Activated naive CD8-positive, alpha-beta T cell treated with anti-CD3 and anti-CD28 coated beads, Interleukin-2, amount 10 ng/mL, durations not matched to agents 7 days and 5 days (primary cell): ENCODE measurements at regions of chr9 and their contacts with region 1.

Region 1: GRCh38 chr9:137240861-137241489 is at the start of gene TUBB4B:
- DNase-seq: peak; percentile 99
- ATAC-seq: peak; percentile 83
- H3K4me3 Mint-ChIP-seq: peak within 1 kb of the TSS; percentile 90
- H3K27ac Mint-ChIP-seq: peak within 1 kb of the TSS; percentile 93
- H3K4me1 Mint-ChIP-seq: peaks cover 24% of the 10 kb centered on the region
- H3K27me3 Mint-ChIP-seq: no peaks in the 10 kb centered on the region
- total RNA-seq, gene TUBB4B: 241 to 249 TPM

Region 2: GRCh38 chr9:136910901-136911245 is 330.1 kb before region 1 on chr9:
- POLR2A ChIA-PET with region 1: no interaction called
- DNase-seq: no peak
- ATAC-seq: no peak
- H3K4me3 Mint-ChIP-seq: no peak overlapping the region
- H3K27ac Mint-ChIP-seq: peak overlapping the region; percentile 67
- H3K4me1 Mint-ChIP-seq: peaks cover 2% of the 10 kb centered on the region
- H3K27me3 Mint-ChIP-seq: no peaks in the 10 kb centered on the region

Region 3: GRCh38 chr9:137070201-137070905 is 170.6 kb before region 1 on chr9 and contains the start of gene SAPCD2:
- POLR2A ChIA-PET with region 1: interaction called, 12 read pairs
- DNase-seq: peak; percentile 90
- ATAC-seq: peak; percentile 90
- H3K4me3 Mint-ChIP-seq: peak within 1 kb of the TSS; percentile 82
- H3K27ac Mint-ChIP-seq: peak within 1 kb of the TSS; percentile 91
- H3K4me1 Mint-ChIP-seq: peaks cover 22% of the 10 kb centered on the region
- H3K27me3 Mint-ChIP-seq: no peaks in the 10 kb centered on the region
- total RNA-seq, gene SAPCD2: 26.4 to 30.0 TPM

Region 4: DNA sequence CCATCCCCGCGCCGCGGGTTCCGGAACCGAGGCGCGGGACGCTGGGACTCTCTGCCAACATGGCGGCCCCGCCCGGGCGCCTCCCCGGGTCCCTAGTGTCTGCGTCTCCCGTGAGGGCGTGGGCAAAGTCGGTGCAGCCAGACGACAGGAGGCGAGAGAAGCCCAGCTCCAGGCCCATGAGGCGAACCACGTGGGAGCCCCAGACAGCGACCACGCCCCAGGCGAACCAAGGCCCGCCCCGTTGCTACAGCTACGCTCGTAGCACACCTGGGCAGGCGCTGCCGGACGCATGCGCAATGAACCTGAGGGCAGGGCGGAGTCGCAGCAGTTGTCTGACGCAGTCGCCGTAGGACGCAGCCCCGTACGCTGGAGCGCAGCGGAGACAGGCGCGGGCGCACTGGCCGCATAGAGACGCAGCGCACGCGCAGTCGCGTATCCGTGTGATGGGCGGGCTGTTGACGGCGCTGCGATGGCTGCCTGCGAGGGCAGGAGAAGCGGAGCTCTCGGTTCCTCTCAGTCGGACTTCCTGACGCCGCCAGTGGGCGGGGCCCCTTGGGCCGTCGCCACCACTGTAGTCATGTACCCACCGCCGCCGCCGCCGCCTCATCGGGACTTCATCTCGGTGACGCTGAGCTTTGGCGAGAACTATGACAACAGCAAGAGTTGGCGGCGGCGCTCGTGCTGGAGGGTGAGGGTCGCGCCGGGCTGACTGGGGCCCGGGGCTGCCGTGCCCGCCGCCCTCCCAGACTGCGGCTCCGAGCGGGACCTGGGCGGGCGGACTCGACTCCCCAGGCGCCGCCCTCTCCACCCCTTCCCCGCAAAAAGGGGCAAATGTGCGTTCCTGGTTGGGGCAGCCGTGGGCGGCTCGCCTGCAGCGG is 154.2 kb before region 1 on chr9 and contains the start of gene MAN1B1:
- POLR2A ChIA-PET with region 1: interaction called, 32 read pairs
- DNase-seq: peak; percentile 99
- ATAC-seq: peak; percentile 89
- H3K4me3 Mint-ChIP-seq: peak within 1 kb of the TSS; percentile 92
- H3K27ac Mint-ChIP-seq: peak within 1 kb of the TSS; percentile 93
- H3K4me1 Mint-ChIP-seq: peaks cover 23% of the 10 kb centered on the region
- H3K27me3 Mint-ChIP-seq: no peaks in the 10 kb centered on the region
- total RNA-seq, gene MAN1B1: 63.2 to 63.9 TPM

Region 5: DNA sequence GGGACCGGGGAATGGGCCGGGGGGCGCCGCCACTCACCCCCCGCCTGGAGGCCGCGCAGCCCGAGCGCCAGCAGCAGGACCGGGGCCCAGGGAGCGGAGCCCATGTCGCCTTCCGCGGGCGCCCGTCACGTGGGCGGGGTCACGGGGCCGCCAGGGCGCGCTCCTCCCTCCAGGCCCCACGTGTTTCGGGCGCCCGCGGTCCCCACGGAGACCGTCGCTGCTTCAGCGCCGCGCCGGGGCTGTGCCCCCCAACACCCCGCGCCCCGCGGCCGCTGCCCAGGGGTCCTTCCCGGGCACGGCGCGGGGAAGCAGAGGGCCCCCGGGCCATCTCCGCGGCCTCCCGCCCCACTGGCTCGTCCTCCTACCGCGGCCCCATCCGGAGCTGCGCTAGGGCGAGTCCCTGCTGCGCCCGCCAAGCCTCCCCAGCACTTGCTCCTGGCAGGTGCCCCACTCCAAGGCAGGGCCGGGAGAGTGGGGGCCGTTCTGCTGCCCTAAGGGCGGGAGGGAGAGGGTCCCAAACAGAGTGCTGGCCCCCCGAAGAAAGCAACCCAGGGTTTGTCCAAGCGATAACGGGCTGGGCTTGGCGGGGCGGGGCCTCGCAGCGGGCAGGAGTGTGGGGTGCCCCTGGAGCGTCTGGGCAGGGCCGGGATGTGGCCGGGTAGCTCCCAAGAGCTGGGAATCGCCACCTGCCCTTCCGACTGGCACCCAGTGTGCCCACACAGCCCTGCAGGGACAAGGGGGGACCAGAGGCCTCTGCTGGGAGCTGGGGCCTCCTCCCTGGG is 126.2 kb before region 1 on chr9 and contains the start of gene DPP7:
- POLR2A ChIA-PET with region 1: interaction called, 14 read pairs
- DNase-seq: peak; percentile 91
- ATAC-seq: peak; percentile 89
- H3K4me3 Mint-ChIP-seq: peak within 1 kb of the TSS; percentile 74
- H3K27ac Mint-ChIP-seq: peak within 1 kb of the TSS; percentile 52
- H3K4me1 Mint-ChIP-seq: peaks cover 3% of the 10 kb centered on the region
- H3K27me3 Mint-ChIP-seq: no peaks in the 10 kb centered on the region
- total RNA-seq, gene DPP7: 314 to 322 TPM

Region 6: DNA sequence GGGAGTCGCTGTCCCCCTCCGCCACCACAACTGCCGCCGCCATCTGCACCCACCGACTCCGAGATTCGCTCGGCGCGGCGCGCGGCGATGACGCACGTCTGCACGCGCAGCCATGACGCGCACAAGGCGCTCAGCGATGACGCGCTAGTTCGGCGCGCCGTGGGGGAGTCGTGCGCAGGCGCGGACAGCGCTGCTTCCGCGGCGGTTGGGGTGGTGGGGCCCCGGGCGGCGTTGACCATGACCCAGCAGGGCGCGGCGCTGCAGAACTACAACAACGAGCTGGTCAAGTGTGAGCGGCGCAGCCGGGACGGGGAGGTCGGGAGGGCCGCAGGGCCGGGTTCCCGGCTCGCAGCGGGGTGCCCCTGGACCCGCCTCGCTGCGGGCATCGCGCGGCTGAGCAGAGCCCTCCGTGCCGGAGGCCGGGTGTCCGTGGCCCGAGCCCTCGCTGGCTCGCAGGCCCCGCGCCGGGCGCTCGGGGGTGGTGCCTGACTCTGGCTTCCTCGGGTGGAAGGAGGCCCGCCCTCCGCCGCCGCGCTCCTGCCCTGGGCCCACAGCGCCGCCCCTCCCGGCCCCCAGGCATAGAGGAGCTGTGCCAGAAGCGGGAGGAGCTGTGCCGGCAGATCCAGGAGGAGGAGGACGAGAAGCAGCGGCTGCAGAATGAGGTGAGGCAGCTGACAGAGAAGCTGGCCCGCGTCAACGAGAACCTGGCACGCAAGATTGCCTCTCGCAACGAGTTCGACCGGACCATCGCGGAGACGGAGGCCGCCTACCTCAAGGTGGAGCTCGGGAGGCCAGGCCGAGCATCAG is 52.3 kb before region 1 on chr9 and contains the starts of genes ANAPC2 and SSNA1:
- POLR2A ChIA-PET with region 1: interaction called, 19 read pairs
- DNase-seq: peak; percentile 99
- ATAC-seq: peak; percentile 83
- H3K4me3 Mint-ChIP-seq: peak within 1 kb of the TSS; percentile 94
- H3K27ac Mint-ChIP-seq: peak within 1 kb of the TSS; percentile 95
- H3K4me1 Mint-ChIP-seq: peaks cover 16% of the 10 kb centered on the region
- H3K27me3 Mint-ChIP-seq: no peaks in the 10 kb centered on the region
- total RNA-seq, gene ANAPC2: 84.2 to 87.8 TPM
- total RNA-seq, gene SSNA1: 62.4 to 65.2 TPM

Region 7: DNA sequence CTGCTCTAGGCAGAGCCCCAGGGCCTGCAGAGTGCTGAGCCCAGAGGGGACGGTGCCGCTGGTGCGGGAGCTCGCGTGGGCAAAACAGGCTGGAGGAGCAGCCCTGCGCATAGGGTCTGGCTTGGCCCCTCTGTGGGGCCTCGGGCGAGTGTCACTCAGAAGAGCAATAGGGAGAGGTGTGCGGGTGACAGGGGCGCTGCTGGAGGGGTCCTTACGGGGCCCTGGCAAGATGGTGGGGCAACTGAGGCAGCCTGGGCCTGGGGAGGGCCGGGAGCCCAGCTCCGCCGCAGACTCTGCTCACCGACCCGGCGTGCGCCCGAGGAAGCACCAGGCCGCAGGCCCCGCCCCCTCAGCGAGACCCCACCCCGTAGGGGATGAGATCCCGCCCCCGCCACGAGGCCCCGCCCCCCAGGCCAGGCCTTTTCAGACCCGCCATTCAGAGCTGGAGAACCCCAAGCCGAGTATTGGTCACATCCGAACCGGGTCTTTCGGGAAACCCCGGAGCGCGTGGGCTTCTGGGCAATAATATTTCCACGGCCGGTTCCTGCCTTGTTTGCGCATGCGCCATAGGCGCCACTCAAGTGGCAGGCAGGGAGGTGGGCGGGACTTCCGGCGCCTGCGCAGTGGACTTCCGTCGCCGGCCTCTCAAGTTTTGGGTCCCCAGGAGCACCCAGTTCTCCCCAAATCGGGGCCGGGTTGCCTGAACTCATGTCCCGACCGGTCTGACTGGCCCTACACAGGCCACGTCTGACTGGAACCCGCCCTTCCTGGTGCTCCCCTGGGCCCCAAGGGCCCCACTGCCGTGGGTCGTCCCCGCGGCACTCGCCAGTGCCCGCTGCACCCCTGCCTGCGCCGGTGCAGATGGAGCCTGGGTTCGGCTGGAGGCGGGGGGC is 17.7 kb before region 1 on chr9:
- POLR2A ChIA-PET with region 1: interaction called, 43 read pairs
- DNase-seq: peak; percentile 98
- ATAC-seq: peak; percentile 87
- H3K4me3 Mint-ChIP-seq: peak overlapping the region; percentile 84
- H3K27ac Mint-ChIP-seq: peak overlapping the region; percentile 82
- H3K4me1 Mint-ChIP-seq: peaks cover 7% of the 10 kb centered on the region
- H3K27me3 Mint-ChIP-seq: peaks cover 2% of the 10 kb centered on the region

Region 8: GRCh38 chr9:137277329-137278041 is 36.5 kb after region 1 on chr9 and contains the start of gene TOR4A:
- POLR2A ChIA-PET with region 1: interaction called, 13 read pairs
- DNase-seq: peak; percentile 70
- ATAC-seq: peak; percentile 68
- H3K4me3 Mint-ChIP-seq: peak within 1 kb of the TSS; percentile 92
- H3K27ac Mint-ChIP-seq: peak within 1 kb of the TSS; percentile 83
- H3K4me1 Mint-ChIP-seq: peaks cover 2% of the 10 kb centered on the region
- H3K27me3 Mint-ChIP-seq: no peaks in the 10 kb centered on the region
- total RNA-seq, gene TOR4A: 8.1 to 8.2 TPM